K562 (cell line): ENCODE measurements at regions of chr3 and their contacts with region 1.

Region 1: GRCh38 chr3:47370887-47371697 is 9.7 kb upstream of the PTPN23 start:
- DNase-seq: peak; percentile 59 to 85 (median 84)
- ATAC-seq: peak; percentile 84
- H3K4me3 ChIP-seq: no peak overlapping the region
- H3K27ac ChIP-seq: no peak overlapping the region
- H3K4me1 ChIP-seq: 0 out of 5 replicates have a peak, but pooled peaks cover 0 to 3% of the 10 kb centered on the region in 2 experiments
- H3K27me3 ChIP-seq: no peaks in the 10 kb centered on the region
- CTCF ChIP-seq: peak; percentile 40 to 61 (median 57); a peak in 4 of 6 replicates
- EP300 ChIP-seq: no peak
- POLR2A ChIP-seq: no peak
- RAD21 ChIP-seq: peak; percentile 42 to 63

Region 2: DNA sequence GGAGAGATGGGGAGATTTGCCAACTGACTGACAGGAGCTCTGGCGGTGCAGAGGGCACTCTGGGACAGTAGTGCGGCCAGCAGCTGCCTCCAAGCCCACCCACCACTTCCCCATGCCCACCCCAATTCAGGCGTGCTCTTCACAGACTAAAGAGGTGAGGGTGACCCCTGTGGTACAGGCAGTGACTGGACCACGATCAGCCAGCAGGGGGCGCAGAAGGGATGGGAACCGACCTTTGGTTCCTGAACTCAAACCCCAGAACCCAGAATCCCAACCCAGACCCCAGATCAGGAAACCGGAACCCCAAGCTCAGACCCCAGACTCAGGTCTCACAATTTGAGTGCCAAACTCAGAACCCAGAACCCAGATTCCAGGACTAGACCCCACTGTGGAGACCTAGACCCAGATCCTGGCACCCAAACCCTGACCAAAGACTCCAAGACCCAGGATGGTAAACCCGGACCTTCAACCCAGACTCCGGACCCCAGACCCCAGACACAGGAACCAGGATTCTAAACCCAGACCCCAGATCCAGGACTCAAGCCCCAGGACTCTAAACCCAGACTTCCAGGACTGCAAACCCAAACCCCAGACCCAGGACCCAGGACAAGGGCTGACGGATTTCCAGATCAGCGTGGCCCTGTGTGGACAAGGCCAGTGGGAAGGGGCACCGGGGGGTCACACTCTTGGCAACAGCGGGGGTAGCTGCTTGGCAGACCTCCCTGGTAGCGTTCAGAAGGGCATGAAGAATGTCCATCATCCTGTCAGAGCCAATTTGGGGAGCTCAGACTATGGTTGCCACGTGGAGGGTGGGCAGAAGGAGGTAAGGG is 504.2 kb before region 1 on chr3:
- CTCF ChIA-PET with region 1: interaction called, 3 read pairs
- POLR2A ChIA-PET with region 1: no interaction called
- in situ Hi-C with region 1: no loop called
- intact Hi-C with region 1: loop called (anchors 10 kb)
- DNase-seq: peak; percentile 80 to 91 (median 86)
- ATAC-seq: peak; percentile 86
- H3K4me3 ChIP-seq: no peak overlapping the region
- H3K27ac ChIP-seq: no peak overlapping the region
- H3K4me1 ChIP-seq: peaks cover 0 to 15% of the 10 kb centered on the region in 2 experiments; a peak in 2 of 5 replicates
- H3K27me3 ChIP-seq: peaks cover 8 to 50% of the 10 kb centered on the region in 2 experiments; a peak in 4 of 5 replicates
- CTCF ChIP-seq: peak; percentile 95 to 96 (median 96)
- EP300 ChIP-seq: no peak
- POLR2A ChIP-seq: no peak
- RAD21 ChIP-seq: peak; percentile 76 to 89

Region 3: GRCh38 chr3:47009225-47010110 is 361.6 kb before region 1 on chr3:
- CTCF ChIA-PET with region 1: no interaction called
- POLR2A ChIA-PET with region 1: no interaction called
- in situ Hi-C with region 1: no loop called
- intact Hi-C with region 1: loop called (anchors 10 kb)
- DNase-seq: no peak
- ATAC-seq: no peak; the same call in 2 of the 3 replicates
- H3K4me3 ChIP-seq: no peak overlapping the region
- H3K27ac ChIP-seq: no peak overlapping the region
- H3K4me1 ChIP-seq: peaks cover 0 to 14% of the 10 kb centered on the region in 2 experiments; a peak in 1 of 5 replicates
- H3K27me3 ChIP-seq: no peaks in the 10 kb centered on the region
- CTCF ChIP-seq: no peak
- EP300 ChIP-seq: no peak
- POLR2A ChIP-seq: no peak
- RAD21 ChIP-seq: no peak

Region 4: GRCh38 chr3:47250309-47251060 is 120.6 kb before region 1 on chr3:
- CTCF ChIA-PET with region 1: interaction called, 7 read pairs
- POLR2A ChIA-PET with region 1: no interaction called
- in situ Hi-C with region 1: no loop called
- intact Hi-C with region 1: loop called (anchors 1 kb)
- DNase-seq: peak; percentile 72 to 86 (median 80)
- ATAC-seq: peak; percentile 96
- H3K4me3 ChIP-seq: no peak overlapping the region
- H3K27ac ChIP-seq: no peak overlapping the region; the same call in 2 of the 3 replicates
- H3K4me1 ChIP-seq: peaks cover 4 to 12% of the 10 kb centered on the region in 2 experiments; a peak in 3 of 5 replicates
- H3K27me3 ChIP-seq: no peaks in the 10 kb centered on the region
- CTCF ChIP-seq: peak; percentile 84 to 90 (median 87)
- EP300 ChIP-seq: no peak
- POLR2A ChIP-seq: no peak
- RAD21 ChIP-seq: peak; percentile 87 to 96